ENCODE measurements at regions of chr7 and their contacts with region 1.

Region 1: DNA sequence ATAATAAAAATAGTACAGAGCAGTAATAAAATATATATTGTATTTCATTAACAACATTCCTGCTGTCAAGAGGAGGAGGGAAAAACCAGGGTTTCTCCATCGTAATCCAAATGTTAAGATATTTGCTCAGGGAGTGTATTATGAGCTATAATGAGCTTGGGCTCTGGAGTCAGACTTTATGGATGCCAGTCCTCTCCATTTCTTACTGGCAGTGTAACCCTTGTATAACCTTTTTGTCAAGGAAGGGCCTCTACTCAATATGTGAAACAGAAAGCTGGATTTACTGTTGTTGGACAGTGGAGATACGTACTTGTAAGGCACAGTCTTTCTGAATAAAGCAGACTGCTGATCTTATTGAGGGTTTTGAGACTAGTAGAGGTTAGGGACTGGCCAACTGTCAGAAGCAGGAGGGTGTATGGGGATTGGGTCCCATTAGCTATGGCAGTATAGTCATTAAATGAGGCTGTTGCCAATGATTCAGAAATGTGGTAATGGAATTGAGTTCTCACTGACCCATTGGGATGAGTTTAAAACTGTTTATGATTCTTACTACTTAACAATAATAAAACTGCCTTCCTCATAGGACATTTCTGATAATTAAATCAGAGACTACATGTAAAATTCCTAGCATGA is 56.5 kb downstream of the ZNF277 start:
- DNase-seq: no peak
- H3K4me3 ChIP-seq: no peak overlapping the region
- CTCF ChIP-seq: no peak

Region 2: GRCh38 chr7:112192236-112193154 is 70.5 kb before region 1 on chr7:
- in situ Hi-C with region 1: no loop called
- DNase-seq: no peak
- H3K4me3 ChIP-seq: no peak overlapping the region
- CTCF ChIP-seq: no peak

Region 3: GRCh38 chr7:112362731-112363131 is 99.8 kb after region 1 on chr7:
- in situ Hi-C with region 1: loop called (anchors 5 kb)
- DNase-seq: peak; percentile 61
- H3K4me3 ChIP-seq: no peak overlapping the region
- CTCF ChIP-seq: no peak

Measured in astrocyte of the cerebellum (primary cell).